Activated naive CD4-positive, alpha-beta T cell treated with anti-CD3 and anti-CD28 coated beads for 36 hours (primary cell): ENCODE measurements at regions of chr13 and their contacts with region 1.

Region 1: DNA sequence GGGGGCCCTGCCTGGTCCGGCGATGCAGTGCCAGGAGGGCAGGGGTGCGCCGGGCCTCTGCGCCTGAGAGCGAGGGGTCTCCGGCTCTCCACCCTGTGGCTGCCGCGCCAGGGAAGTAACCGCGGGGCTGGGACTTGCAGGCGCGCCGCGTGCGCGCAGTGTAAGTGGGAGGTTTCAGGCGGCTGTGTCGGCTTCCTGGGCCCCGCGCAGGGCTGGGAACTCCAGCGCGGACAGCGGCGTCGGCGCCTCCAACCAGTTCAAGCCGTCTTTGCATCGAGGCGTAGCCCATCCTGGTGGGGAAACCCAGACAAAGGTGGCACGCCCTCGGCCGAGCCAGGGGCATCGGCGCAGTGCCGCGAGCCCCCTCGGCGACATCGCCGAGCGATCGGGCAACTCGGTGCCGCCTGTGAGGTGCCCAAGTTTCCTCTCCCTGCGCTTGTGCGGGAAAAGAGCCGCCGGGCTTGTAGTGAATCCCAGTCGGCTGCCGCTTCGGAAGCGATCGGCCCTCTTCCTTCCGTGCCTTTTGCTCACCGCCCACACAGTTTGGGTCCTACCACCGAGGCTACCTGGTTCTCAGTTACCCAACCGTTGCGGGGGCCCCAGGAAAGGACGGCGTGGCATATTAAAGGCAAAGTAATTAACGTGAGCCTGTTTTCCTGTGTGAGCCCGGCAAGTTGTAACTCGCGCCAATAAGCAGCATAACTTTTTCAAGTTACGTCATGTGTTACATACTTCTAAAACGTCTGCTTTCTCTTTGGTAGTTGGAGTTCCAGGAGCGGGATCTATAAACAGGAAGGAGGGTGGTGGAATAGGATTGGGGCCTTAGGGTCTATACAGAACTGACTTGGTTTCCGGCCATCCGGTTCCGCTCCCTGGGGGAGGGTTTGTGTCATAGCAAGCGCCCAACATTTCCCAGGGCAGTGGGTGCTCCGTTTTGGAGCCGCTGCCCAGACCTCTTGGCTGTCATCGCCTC is 1.2 kb downstream of the LRCH1 start:
- DNase-seq: peak; percentile 79
- H3K4me3 Mint-ChIP-seq: peak overlapping the region; percentile 91
- H3K27ac Mint-ChIP-seq: peak overlapping the region; percentile 86
- H3K4me1 Mint-ChIP-seq: peaks cover 40% of the 10 kb centered on the region
- H3K27me3 Mint-ChIP-seq: no peaks in the 10 kb centered on the region

Region 2: GRCh38 chr13:46530084-46530935 is 23.9 kb before region 1 on chr13:
- CTCF ChIA-PET with region 1: interaction called, 14 read pairs
- intact Hi-C with region 1: no loop called
- DNase-seq: no peak
- H3K4me3 Mint-ChIP-seq: no peak overlapping the region
- H3K27ac Mint-ChIP-seq: no peak overlapping the region
- H3K4me1 Mint-ChIP-seq: peaks cover 23% of the 10 kb centered on the region
- H3K27me3 Mint-ChIP-seq: peaks cover 2% of the 10 kb centered on the region

Region 3: DNA sequence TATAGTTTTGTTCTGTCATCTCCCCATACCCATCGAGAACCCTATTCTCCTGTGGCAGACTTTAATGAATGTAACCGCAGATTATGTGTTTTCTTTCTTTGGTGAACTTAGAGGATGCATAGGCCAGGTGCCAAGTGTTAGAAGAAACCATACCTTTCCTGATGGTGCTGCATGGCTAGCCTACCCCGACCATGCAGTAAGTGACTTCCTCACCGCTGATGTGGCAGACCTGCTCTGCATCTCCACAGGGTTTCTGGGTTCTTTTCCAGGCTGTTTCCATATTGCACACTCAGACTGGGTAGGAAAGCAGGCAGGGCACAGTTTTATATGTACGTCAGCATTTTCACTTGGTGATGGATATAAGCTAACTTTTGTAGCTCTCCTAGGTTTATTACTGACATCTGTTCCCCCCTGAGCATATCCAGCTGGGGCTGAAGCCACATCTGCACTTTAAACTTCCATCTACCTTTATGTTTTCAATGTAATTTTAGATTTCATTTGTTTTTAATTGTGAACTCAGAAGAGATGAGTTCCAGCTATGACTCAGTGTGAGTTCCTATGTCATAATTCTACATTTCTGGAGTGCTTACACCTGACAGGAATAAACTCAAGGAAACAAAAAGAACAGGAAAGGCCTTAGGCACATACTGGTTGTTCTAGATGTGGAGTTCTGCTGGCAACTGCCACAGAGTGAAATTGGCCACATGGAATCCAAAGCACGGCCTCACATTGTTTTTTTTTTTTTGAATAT is 41.1 kb after region 1 on chr13:
- CTCF ChIA-PET with region 1: interaction called, 11 read pairs
- intact Hi-C with region 1: loop called (anchors 1 kb)
- DNase-seq: no peak
- H3K4me3 Mint-ChIP-seq: no peak overlapping the region
- H3K27ac Mint-ChIP-seq: no peak overlapping the region
- H3K4me1 Mint-ChIP-seq: peaks cover 80% of the 10 kb centered on the region
- H3K27me3 Mint-ChIP-seq: no peaks in the 10 kb centered on the region

Region 4: DNA sequence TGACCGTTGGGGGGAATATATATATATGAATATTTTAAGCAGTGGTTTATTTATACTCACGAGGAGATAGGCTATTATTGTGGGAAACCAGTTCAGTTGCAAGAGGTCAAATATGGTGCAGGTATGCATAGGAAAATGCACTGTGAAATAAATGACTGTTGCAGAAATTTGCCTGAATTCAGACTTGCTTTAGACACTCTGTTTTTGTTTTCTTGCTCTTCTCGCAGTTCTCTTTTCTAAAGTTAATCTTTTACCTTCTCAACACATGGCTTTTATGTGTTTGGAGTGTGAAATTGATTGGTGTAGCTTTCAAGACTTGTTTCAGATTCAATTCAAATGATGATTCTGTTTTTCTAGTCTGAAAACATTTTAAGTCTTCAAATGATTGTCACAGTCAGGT is 108.5 kb after region 1 on chr13:
- CTCF ChIA-PET with region 1: interaction called, 12 read pairs
- intact Hi-C with region 1: loop called (anchors 1 kb)
- DNase-seq: no peak
- H3K4me3 Mint-ChIP-seq: no peak overlapping the region
- H3K27ac Mint-ChIP-seq: no peak overlapping the region
- H3K4me1 Mint-ChIP-seq: peaks cover 38% of the 10 kb centered on the region
- H3K27me3 Mint-ChIP-seq: no peaks in the 10 kb centered on the region

Region 5: GRCh38 chr13:46721054-46721453 is 166.9 kb after region 1 on chr13:
- CTCF ChIA-PET with region 1: interaction called, 48 read pairs
- intact Hi-C with region 1: loop called (anchors 1 kb)
- DNase-seq: peak; percentile 67
- H3K4me3 Mint-ChIP-seq: no peak overlapping the region
- H3K27ac Mint-ChIP-seq: no peak overlapping the region
- H3K4me1 Mint-ChIP-seq: no peaks in the 10 kb centered on the region
- H3K27me3 Mint-ChIP-seq: no peaks in the 10 kb centered on the region